ENCODE measurements at regions of chr6 and their contacts with region 1.

Region 1: DNA sequence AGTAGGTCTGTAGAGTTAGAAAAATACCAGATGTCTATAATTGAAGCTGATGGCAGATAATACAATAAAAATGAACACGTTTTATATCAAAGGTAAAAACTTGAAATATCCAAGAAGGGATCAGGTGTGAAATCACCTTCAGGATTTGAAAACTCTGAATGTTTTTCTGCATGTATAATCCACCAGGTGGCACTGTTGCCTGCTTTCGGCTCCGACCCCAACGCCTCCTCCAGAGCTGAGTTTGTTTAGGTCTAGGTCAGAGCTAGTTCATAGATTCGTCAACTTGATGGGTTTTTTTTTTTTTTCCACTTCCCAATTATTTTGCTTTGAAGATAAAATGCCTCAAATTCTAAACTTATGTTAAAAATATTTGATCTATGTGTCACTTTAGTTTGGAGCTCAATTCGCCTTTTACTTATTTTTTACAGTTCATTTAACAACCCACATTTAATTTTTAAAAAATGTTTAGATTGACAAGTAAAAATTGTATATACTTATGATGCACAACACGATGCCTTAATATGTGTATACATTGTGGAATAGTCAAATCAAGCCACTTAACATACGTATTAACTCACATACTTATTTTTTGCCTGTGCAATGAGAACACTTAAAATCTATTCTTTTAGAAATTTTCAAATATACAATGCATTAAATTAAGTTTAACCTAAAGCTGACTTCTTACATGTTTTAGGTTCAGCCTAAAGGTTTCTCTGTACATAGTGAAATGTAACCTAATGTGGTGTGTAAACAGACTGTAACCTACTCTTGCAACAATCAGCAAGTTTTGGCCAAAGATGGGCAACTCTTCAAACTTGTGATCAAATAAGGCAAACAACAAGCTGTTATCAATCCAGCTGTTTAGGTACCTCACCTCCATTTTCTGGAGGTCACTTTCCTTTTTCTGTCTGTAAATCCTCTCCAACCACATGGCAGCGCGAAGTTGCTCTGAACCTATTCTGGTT is 39.4 kb upstream of the ENPP4 start:
- DNase-seq: peak; percentile 19
- H3K4me3 Mint-ChIP-seq: no peak overlapping the region
- H3K27ac Mint-ChIP-seq: no peak overlapping the region
- H3K4me1 Mint-ChIP-seq: no peaks in the 10 kb centered on the region
- H3K27me3 Mint-ChIP-seq: peaks cover 19% of the 10 kb centered on the region

Region 2: DNA sequence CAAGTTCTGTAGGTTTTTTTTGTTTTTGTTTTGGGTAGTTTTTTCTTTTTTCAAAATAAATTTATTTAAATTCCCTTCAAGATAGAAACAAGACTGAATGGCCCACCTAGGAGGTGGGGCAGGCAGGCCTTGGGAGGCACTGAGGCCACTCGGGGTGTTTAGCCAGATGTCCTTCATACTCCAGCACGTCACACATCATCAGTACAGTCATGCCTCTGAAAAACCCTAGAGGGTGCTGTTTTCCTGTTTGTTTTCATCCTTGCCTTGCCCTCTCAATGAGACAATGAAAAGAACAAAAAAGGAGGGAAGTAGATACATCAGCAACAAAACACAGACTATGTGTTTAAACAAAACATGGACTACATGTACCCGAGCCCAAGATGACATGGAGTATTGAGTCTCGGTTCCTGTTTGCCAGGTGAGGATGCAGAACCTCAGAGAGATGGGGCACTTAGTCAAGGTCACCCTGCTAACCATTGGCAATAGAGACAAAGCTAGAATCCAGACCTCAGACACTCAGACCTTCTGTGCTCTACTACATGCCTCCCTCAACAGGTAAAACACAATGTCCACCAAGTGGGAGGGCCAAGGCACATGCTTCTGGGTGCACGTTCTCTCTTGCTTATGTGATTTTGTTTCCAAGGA is 47.9 kb before region 1 on chr6:
- intact Hi-C with region 1: loop called (anchors 1 kb)
- DNase-seq: no peak
- H3K4me3 Mint-ChIP-seq: no peak overlapping the region
- H3K27ac Mint-ChIP-seq: no peak overlapping the region
- H3K4me1 Mint-ChIP-seq: peaks cover 5% of the 10 kb centered on the region
- H3K27me3 Mint-ChIP-seq: no peaks in the 10 kb centered on the region

Region 3: GRCh38 chr6:46138281-46138680 is 47.9 kb after region 1 on chr6:
- intact Hi-C with region 1: no loop called
- DNase-seq: no peak
- H3K4me3 Mint-ChIP-seq: no peak overlapping the region
- H3K27ac Mint-ChIP-seq: no peak overlapping the region
- H3K4me1 Mint-ChIP-seq: no peaks in the 10 kb centered on the region
- H3K27me3 Mint-ChIP-seq: no peaks in the 10 kb centered on the region

Region 4: DNA sequence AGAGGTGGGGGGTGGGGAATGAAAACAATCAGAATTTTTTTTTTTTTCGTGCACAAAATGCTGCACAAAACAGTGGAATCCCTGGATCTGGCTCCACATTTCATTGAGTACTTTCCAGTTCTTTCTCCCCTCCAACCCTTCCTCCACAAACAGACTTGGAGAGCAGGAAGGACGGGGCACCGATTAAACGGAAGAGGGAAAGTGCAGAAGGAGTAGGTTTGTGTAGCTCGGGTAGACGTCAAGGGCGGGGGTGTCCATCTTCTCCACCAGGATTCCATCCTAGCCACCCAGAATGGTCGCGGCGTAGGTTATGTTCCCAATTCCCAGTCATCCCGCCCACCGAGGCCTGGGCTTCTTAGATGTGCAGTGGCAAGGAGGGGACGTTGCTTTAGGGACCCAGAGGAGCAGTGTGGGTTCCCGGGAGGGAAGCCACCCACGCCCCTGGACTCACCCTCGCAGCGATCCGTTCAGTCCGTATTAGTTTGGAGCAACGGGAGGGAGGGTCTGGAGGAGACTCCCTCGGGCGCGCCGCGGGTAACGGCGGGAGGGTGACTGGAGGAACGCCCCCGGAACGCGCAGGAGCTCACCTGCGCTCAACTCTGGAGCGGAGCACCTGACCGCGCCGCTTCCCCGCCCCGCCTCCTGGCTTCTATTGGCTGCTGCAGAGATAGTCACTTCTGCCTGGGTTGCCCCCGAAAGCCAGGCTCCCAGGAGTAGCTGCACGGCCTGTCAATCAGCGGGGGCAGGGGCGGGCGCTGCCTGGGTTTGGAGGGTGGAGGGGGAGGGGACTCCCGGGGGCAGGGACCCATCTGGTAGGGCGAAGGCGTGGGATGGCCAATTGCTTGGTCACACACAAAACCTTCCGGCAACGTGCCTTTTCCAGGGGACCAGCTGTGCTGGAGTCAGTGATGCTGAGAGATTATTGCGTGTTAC is 80.2 kb after region 1 on chr6 and contains the start of gene ENPP5:
- intact Hi-C with region 1: loop called (anchors 2 kb)
- DNase-seq: no peak
- H3K4me3 Mint-ChIP-seq: peak within 1 kb of the TSS; percentile 67
- H3K27ac Mint-ChIP-seq: no peak within 1 kb of the TSS
- H3K4me1 Mint-ChIP-seq: peaks cover 27% of the 10 kb centered on the region
- H3K27me3 Mint-ChIP-seq: peaks cover 71% of the 10 kb centered on the region
- total RNA-seq, gene ENPP5: not detected in 2 replicates

Region 5: GRCh38 chr6:46626228-46626909 is 536.0 kb after region 1 on chr6:
- intact Hi-C with region 1: loop called (anchors 1 kb)
- DNase-seq: no peak
- H3K4me3 Mint-ChIP-seq: no peak overlapping the region
- H3K27ac Mint-ChIP-seq: no peak overlapping the region
- H3K4me1 Mint-ChIP-seq: no peaks in the 10 kb centered on the region
- H3K27me3 Mint-ChIP-seq: peaks cover 9% of the 10 kb centered on the region

Region 6: GRCh38 chr6:47047479-47048407 is 957.3 kb after region 1 on chr6:
- intact Hi-C with region 1: loop called (anchors 2 kb)
- DNase-seq: peak; percentile 2
- H3K4me3 Mint-ChIP-seq: no peak overlapping the region
- H3K27ac Mint-ChIP-seq: no peak overlapping the region
- H3K4me1 Mint-ChIP-seq: peaks cover 5% of the 10 kb centered on the region
- H3K27me3 Mint-ChIP-seq: peaks cover 3% of the 10 kb centered on the region